ENCODE measurements at regions of chr20 and their contacts with region 1.

Region 1: GRCh38 chr20:8039042-8039441 is 19.5 kb upstream of the TMX4 start:
- DNase-seq: no peak

Region 2: DNA sequence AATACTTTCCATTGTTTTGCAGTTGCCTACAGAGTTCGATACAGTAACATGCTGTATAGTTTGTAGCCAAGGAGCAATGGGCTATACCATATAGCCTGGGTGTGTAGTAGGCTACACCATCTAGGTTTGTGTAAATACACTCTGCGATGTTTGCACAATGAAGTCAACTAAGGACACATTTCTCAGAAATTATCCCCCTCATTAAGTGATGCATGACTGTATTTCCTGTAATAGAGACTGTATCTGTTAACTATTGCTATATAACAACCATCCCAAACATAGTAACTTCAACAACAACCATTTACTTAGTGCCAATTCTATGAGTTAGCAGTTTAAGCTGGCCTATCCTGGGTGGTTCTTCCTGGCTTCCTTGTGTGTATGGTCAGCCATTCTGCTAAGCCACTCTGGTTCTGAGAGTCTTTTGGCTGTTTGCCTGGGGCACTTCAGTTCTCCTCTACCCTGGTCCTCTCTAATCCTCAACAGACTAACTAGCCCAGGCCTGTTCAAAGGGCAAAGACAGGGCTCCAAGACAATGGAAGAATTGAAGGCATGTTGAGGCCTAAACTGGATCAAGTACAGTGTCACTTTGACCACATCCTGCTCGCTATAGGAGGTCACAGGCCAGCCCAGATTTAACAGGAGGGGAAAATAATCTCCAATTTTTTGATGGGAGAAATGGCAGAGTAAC is 217.0 kb after region 1 on chr20:
- intact Hi-C with region 1: no loop called
- DNase-seq: no peak

Region 3: GRCh38 chr20:8722276-8722928 is 683.4 kb after region 1 on chr20:
- intact Hi-C with region 1: loop called (anchors 10 kb)
- DNase-seq: peak in 26 of 42 donors; percentile 11 to 80 (median 48)

Measured in head of caudate nucleus (tissue), 42 donors.